GM12878 (cell line): ENCODE measurements at regions of chr5 and their contacts with region 1.

Region 1: DNA sequence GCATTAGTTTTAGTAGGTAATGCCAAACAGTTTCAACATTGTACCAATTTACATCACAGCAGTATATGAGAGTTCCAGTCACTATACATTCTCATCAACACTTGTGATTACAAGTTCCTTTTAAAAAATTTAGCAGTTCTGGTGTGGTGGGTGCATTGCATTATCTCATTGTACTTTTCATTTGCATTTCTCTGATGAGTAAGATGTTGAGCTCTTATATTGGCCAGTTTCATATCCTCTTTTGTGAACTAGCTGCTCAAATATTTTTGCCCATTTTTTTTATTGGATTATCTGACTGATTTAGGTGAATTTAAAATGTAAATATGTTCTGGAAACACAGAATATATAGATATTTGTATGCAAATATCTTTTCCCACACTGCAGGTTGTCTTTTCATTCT is 160.9 kb upstream of the NR3C1 start:
- DNase-seq: peak; percentile 58
- ATAC-seq: peak; percentile 99
- H3K4me3 ChIP-seq: no peak overlapping the region
- H3K27ac ChIP-seq: no peak overlapping the region
- H3K4me1 ChIP-seq: peaks cover 9% of the 10 kb centered on the region; the same call in 1 of the 2 replicates
- H3K27me3 ChIP-seq: no peaks in the 10 kb centered on the region
- CTCF ChIP-seq: no peak
- EP300 ChIP-seq: peak; percentile 80 to 91
- POLR2A ChIP-seq: no peak
- RAD21 ChIP-seq: no peak

Region 2: GRCh38 chr5:143413958-143414669 is 150.3 kb before region 1 on chr5:
- CTCF ChIA-PET with region 1: no interaction called
- POLR2A ChIA-PET with region 1: interaction called, 3 read pairs
- RAD21 ChIA-PET with region 1: interaction called, 11 read pairs
- SMC1A ChIA-PET with region 1: interaction called, 6 read pairs
- in situ Hi-C with region 1: no loop called
- intact Hi-C with region 1: no loop called
- DNase-seq: no peak
- ATAC-seq: peak; percentile 71
- H3K4me3 ChIP-seq: peak overlapping the region; percentile 16; the same call in 1 of the 2 replicates
- H3K27ac ChIP-seq: peak overlapping the region; percentile 76
- H3K4me1 ChIP-seq: peaks cover 43% of the 10 kb centered on the region
- H3K27me3 ChIP-seq: no peaks in the 10 kb centered on the region
- CTCF ChIP-seq: no peak
- EP300 ChIP-seq: peak; percentile 21 to 63; a peak in 2 of 4 replicates
- POLR2A ChIP-seq: no peak
- RAD21 ChIP-seq: no peak

Region 3: GRCh38 chr5:143576711-143577484 is 12.5 kb after region 1 on chr5:
- CTCF ChIA-PET with region 1: interaction called, 5 read pairs
- POLR2A ChIA-PET with region 1: no interaction called
- RAD21 ChIA-PET with region 1: interaction called, 10 read pairs
- SMC1A ChIA-PET with region 1: interaction called, 55 read pairs
- in situ Hi-C with region 1: no loop called
- intact Hi-C with region 1: no loop called
- DNase-seq: no peak
- ATAC-seq: no peak
- H3K4me3 ChIP-seq: no peak overlapping the region
- H3K27ac ChIP-seq: no peak overlapping the region
- H3K4me1 ChIP-seq: peaks cover 3% of the 10 kb centered on the region; the same call in 1 of the 2 replicates
- H3K27me3 ChIP-seq: no peaks in the 10 kb centered on the region
- CTCF ChIP-seq: no peak
- EP300 ChIP-seq: no peak
- POLR2A ChIP-seq: no peak
- RAD21 ChIP-seq: no peak

Region 4: GRCh38 chr5:143582869-143583268 is 18.5 kb after region 1 on chr5:
- CTCF ChIA-PET with region 1: interaction called, 5 read pairs
- POLR2A ChIA-PET with region 1: interaction called, 5 read pairs
- RAD21 ChIA-PET with region 1: interaction called, 10 read pairs
- SMC1A ChIA-PET with region 1: interaction called, 55 read pairs
- in situ Hi-C with region 1: no loop called
- intact Hi-C with region 1: no loop called
- DNase-seq: no peak
- ATAC-seq: peak; percentile 81
- H3K4me3 ChIP-seq: no peak overlapping the region
- H3K27ac ChIP-seq: no peak overlapping the region
- H3K4me1 ChIP-seq: peaks cover 7% of the 10 kb centered on the region
- H3K27me3 ChIP-seq: no peaks in the 10 kb centered on the region
- CTCF ChIP-seq: no peak
- EP300 ChIP-seq: no peak
- POLR2A ChIP-seq: no peak
- RAD21 ChIP-seq: 0 out of 2 replicates have a peak, but pooled peaks have one; percentile 2